ENCODE measurements at regions of chr7 and their contacts with region 1.

Region 1: DNA sequence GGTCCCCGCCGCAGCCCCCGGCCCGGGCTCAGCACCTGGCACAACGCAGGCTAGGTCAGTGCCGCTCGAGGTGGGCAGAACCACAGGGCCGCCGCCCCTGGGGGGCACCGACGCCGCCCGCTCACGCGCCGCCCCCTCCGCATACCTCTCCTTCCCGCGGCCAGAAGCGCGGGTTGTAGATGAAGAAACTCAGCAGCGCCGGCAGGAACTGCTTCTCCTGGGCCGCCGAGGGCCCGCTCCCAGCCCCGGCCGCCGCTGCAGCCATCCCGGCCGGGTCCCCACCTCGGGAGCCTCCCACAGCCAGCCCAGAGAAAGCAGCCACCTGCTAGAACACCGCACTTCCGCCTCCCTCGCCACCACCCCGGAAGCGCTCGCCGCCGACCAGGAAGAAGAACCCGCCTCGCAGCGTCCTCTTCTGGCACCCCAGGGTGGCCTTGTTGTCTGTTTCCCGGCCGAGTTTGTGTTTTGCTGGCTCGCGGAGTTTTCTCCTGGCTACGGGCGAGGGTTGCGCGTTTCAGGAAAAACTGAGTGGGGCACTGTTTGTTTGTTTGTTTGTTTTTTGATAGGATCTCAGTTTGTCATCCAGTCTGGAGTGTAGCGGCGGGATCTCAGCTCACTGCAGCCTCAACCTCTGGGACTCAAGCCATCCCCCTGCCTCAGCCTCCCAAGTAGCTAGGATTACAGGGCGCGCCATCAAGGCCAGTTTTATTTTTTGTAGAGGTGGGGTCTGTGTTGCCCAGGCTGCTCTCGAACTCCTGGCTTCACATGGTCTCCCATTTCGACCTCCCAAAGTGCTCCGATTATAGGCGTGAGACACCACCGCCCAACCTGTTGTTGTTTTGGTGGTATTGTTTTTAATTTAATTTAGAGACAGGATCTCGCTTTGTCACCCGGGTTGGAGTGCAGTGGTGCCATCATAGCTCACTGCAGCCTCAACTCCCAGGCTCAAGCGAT is 17.7 kb downstream of the OCM2 start:
- DNase-seq: peak; percentile 68 to 86 (median 83)
- ATAC-seq: peak; percentile 94
- H3K4me3 ChIP-seq: peak overlapping the region; percentile 87
- H3K4me3 Mint-ChIP-seq: peak overlapping the region; percentile 90 to 98 (median 96)
- H3K27ac ChIP-seq: peak overlapping the region; percentile 84
- H3K27ac Mint-ChIP-seq: peak overlapping the region; percentile 94 to 97 (median 96)
- H3K4me1 ChIP-seq: peaks cover 10% of the 10 kb centered on the region in 2 donors
- H3K4me1 Mint-ChIP-seq: peaks cover 5 to 37% (median 17%) of the 10 kb centered on the region in 7 donors
- H3K27me3 ChIP-seq: no peaks in the 10 kb centered on the region
- H3K27me3 Mint-ChIP-seq: peaks cover 0 to 3% (median 0%) of the 10 kb centered on the region in 5 donors

Region 2: GRCh38 chr7:97215556-97215955 is 756.7 kb before region 1 on chr7:
- CTCF ChIA-PET with region 1: no interaction called
- POLR2A ChIA-PET with region 1: no interaction called
- intact Hi-C with region 1: no loop called
- DNase-seq: no peak
- ATAC-seq: no peak
- H3K4me3 ChIP-seq: no peak overlapping the region
- H3K4me3 Mint-ChIP-seq: no peak overlapping the region
- H3K27ac ChIP-seq: no peak overlapping the region
- H3K27ac Mint-ChIP-seq: no peak overlapping the region
- H3K4me1 ChIP-seq: no peaks in the 10 kb centered on the region
- H3K4me1 Mint-ChIP-seq: no peaks in the 10 kb centered on the region
- H3K27me3 ChIP-seq: peaks cover 0 to 4% of the 10 kb centered on the region in 2 donors
- H3K27me3 Mint-ChIP-seq: peaks cover 2 to 27% (median 20%) of the 10 kb centered on the region in 5 donors

Region 3: DNA sequence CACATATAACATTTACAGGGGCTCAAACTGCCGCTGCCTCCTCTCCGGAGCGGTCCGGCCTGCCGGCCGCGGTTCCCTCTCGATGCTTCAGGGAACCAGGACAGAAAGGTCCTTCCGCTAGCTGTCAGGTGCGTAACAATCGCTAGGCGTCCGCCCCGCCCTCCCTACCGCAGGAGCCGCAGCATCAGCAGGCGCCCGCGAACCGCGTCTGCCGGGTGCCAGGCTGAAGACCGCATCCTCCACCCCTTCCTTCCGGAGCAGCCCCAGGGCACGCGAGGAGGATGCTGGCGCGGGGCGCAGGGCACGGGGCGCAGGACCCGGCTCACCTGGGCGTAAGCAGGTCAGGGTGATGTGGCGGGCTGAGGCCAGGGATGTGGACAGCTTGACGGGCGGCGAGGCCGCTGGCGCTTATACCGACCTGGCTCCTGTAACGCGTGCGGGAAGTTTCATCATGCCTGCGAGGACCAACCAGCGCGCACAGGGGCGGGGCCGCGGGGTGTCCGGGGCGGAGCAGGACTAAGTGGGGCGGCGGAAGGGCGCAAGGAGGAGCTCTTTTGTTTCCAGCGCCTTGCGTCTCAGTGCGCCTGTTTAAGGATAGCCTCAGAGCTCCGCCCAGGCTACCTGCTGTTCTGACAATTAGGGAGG is 100.1 kb before region 1 on chr7 and contains the start of gene ASNS:
- CTCF ChIA-PET with region 1: no interaction called
- POLR2A ChIA-PET with region 1: no interaction called
- intact Hi-C with region 1: loop called (anchors 1 kb)
- DNase-seq: peak; percentile 59 to 92 (median 82)
- ATAC-seq: peak; percentile 92
- H3K4me3 ChIP-seq: peak within 1 kb of the TSS; percentile 79
- H3K4me3 Mint-ChIP-seq: peak within 1 kb of the TSS; percentile 87 to 92 (median 91)
- H3K27ac ChIP-seq: peak within 1 kb of the TSS; percentile 76
- H3K27ac Mint-ChIP-seq: peak within 1 kb of the TSS; percentile 66 to 93 (median 91)
- H3K4me1 ChIP-seq: peaks cover 0 to 15% of the 10 kb centered on the region in 2 donors
- H3K4me1 Mint-ChIP-seq: peaks cover 9 to 26% (median 15%) of the 10 kb centered on the region in 7 donors
- H3K27me3 ChIP-seq: no peaks in the 10 kb centered on the region
- H3K27me3 Mint-ChIP-seq: no peaks in the 10 kb centered on the region
- total RNA-seq, gene ASNS: 23.1 to 49.3 (median 31.8) TPM

Region 4: GRCh38 chr7:97961908-97962307 is 10.4 kb before region 1 on chr7:
- CTCF ChIA-PET with region 1: no interaction called
- POLR2A ChIA-PET with region 1: no interaction called
- intact Hi-C with region 1: loop called in 1 of 2 experiments (anchors 1 kb)
- DNase-seq: no peak
- ATAC-seq: no peak
- H3K4me3 ChIP-seq: no peak overlapping the region
- H3K4me3 Mint-ChIP-seq: no peak overlapping the region
- H3K27ac ChIP-seq: no peak overlapping the region
- H3K27ac Mint-ChIP-seq: no peak overlapping the region
- H3K4me1 ChIP-seq: no peaks in the 10 kb centered on the region
- H3K4me1 Mint-ChIP-seq: no peaks in the 10 kb centered on the region
- H3K27me3 ChIP-seq: no peaks in the 10 kb centered on the region
- H3K27me3 Mint-ChIP-seq: no peaks in the 10 kb centered on the region